WTC11 (cell line): ENCODE measurements at regions of chr1 and their contacts with region 1.

Region 1: GRCh38 chr1:111507411-111508201 is 4.2 kb upstream of the ADORA3 start:
- DNase-seq: peak; percentile 79
- ATAC-seq: peak; percentile 88
- H3K4me3 Mint-ChIP-seq: peak overlapping the region; percentile 63
- H3K27ac Mint-ChIP-seq: peak overlapping the region; percentile 50; the same call in 1 of the 2 replicates
- H3K4me1 Mint-ChIP-seq: peaks cover 7% of the 10 kb centered on the region
- H3K27me3 Mint-ChIP-seq: no peaks in the 10 kb centered on the region
- CTCF ChIP-seq: no peak

Region 2: DNA sequence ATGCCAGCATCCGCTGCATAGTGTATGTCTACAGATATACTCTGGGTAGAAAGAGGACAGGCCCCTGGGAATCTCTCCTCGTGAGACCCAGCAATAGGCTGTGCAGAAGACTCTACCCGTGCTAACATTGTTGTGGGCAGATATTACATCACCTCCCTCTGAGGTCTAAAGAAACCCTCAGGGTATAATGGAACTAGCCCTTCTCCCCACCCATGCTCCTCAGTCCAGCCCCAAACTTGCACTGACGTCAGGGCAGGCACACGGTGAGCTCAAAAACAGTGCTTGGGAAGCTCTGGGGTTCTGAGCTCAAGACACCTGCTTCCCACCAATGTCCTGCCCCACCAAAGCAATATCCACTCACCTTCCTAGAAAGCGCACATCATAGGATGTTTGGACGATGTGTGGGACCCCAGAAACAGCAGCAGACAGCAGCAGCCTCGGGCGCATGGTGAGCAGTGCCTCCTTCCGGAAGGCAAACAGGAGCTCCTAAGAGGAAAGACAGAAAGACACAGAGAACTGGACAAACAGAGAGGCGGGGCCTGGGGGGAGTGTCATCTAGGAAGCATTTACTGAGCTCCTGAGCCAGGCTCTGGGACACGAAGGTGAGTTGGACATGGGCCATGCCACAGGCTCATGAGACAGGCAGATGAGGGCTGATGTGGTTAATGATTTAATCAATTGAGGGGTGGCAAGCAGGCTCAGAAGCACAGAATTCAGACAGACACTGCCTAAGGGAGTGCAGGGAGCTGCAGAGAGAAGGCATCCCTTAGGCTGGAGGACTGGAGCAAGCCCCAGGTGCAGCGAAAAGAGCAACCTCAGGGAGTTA is 84.8 kb before region 1 on chr1:
- CTCF ChIA-PET with region 1: no interaction called
- POLR2A ChIA-PET with region 1: no interaction called
- DNase-seq: no peak
- ATAC-seq: no peak
- H3K4me3 Mint-ChIP-seq: no peak overlapping the region
- H3K27ac Mint-ChIP-seq: no peak overlapping the region
- H3K4me1 Mint-ChIP-seq: peaks cover 6% of the 10 kb centered on the region
- H3K27me3 Mint-ChIP-seq: no peaks in the 10 kb centered on the region; the same call in none of the 2 replicates
- CTCF ChIP-seq: no peak

Region 3: GRCh38 chr1:111497592-111497991 is 10.0 kb before region 1 on chr1:
- CTCF ChIA-PET with region 1: interaction called, 45 read pairs
- POLR2A ChIA-PET with region 1: interaction called, 3 read pairs
- DNase-seq: no peak
- ATAC-seq: no peak
- H3K4me3 Mint-ChIP-seq: no peak overlapping the region
- H3K27ac Mint-ChIP-seq: no peak overlapping the region
- H3K4me1 Mint-ChIP-seq: peaks cover 6% of the 10 kb centered on the region
- H3K27me3 Mint-ChIP-seq: peaks cover 3% of the 10 kb centered on the region; the same call in 1 of the 2 replicates
- CTCF ChIP-seq: no peak

Region 4: DNA sequence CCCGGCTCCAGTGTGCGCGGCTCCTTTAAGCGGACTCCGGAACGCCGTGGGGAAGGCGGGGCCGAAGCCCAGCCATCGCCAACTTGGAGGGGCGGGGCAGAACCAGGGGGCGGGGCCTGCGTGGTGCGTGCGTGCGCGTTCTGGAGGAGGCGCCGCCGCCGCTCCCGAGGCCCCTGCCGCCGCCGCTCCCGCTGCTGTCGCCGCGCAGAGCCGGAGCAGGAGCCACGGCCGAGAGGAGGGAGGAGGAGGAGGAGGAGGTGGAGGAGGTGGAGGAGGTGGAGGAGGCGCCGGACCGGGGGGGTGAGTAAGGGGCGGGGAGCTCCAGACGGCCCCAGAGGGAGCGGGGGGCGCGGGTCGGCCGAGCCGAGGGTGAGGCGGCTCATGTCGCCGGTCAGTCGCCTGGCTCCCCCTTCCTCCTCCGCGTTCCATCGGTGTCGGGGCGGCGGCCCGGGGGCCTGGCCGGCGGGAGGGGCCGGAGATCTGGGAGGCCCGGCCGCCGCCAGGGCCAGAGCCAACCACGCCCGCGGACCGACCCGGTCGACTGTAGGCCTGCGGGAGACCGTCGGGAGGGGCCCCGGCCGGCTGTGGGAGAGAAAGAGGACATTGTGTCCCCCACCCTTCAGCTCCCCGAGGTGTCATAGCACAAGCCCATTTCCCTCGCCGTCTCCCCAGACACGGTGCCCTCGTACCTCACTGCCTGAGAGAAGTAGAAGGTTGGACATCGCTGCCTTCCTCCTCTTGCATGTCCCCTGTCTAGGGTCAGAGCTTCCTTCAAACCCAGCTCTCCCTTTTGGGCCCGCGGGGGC is 112.2 kb after region 1 on chr1 and contains the start of gene RAP1A:
- CTCF ChIA-PET with region 1: interaction called, 42 read pairs
- POLR2A ChIA-PET with region 1: interaction called, 6 read pairs
- DNase-seq: peak; percentile 96
- ATAC-seq: peak; percentile 95
- H3K4me3 Mint-ChIP-seq: peak within 1 kb of the TSS; percentile 76
- H3K27ac Mint-ChIP-seq: peak within 1 kb of the TSS; percentile 38; the same call in 1 of the 2 replicates
- H3K4me1 Mint-ChIP-seq: peaks cover 25% of the 10 kb centered on the region
- H3K27me3 Mint-ChIP-seq: no peaks in the 10 kb centered on the region; the same call in 1 of the 2 replicates
- CTCF ChIP-seq: no peak
- total RNA-seq, gene RAP1A: 25.4 to 28.3 TPM (median 27.4 TPM) in 3 replicates

Region 5: GRCh38 chr1:111690306-111690617 is 182.7 kb after region 1 on chr1:
- CTCF ChIA-PET with region 1: interaction called, 15 read pairs
- POLR2A ChIA-PET with region 1: no interaction called
- DNase-seq: no peak
- ATAC-seq: no peak
- H3K4me3 Mint-ChIP-seq: no peak overlapping the region
- H3K27ac Mint-ChIP-seq: no peak overlapping the region
- H3K4me1 Mint-ChIP-seq: no peaks in the 10 kb centered on the region
- H3K27me3 Mint-ChIP-seq: no peaks in the 10 kb centered on the region
- CTCF ChIP-seq: no peak

Region 6: DNA sequence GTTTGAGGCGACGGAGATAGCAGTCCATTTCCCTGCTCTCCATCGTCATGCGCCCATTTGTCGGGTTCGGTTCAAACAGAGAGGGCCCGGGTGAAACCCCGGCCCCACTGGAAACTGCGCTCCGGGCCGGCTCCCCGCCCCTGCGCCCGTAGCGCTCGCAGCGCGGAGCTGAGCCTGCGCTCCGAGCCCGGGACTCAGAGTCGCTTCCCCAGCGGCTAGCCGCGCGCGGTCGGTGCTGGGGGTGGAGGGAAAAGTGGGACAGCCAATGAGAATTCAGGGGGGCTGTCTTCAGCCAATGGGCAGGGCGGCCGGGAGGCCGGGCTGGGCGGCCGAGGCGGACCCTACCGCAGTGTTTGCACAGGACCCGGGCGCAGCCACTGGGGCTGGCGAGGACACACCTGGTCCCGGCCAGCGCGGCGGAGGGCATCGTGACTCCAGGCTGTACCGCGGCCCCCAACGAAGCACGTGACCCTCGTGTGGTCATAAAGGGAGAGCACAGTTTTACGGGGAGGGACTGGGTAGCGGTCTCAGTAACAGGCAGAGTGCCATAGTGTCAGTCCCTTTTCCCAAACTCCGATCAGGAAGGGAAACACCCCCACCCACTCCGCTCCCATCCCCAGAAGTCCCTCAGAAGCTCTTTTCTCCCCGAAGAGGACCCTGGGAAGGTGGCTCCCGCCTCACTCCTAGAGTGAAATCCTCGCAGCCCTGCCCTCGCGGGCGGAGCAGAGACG is 231.8 kb after region 1 on chr1 and contains the start of gene INKA2:
- CTCF ChIA-PET with region 1: interaction called, 31 read pairs
- POLR2A ChIA-PET with region 1: interaction called, 4 read pairs
- DNase-seq: peak; percentile 95
- ATAC-seq: peak; percentile 75
- H3K4me3 Mint-ChIP-seq: no peak within 1 kb of the TSS
- H3K27ac Mint-ChIP-seq: peak within 1 kb of the TSS; percentile 99
- H3K4me1 Mint-ChIP-seq: peaks cover 15% of the 10 kb centered on the region
- H3K27me3 Mint-ChIP-seq: peaks cover 23% of the 10 kb centered on the region
- CTCF ChIP-seq: no peak
- total RNA-seq, gene INKA2: 19.2 to 22.5 TPM (median 20.1 TPM) in 3 replicates